ENCODE measurements at regions of chr4 and their contacts with region 1.

Region 1: GRCh38 chr4:150867148-150867547 is 147.9 kb downstream of the LRBA start:
- DNase-seq: peak in 1 of 2 donors; percentile 85
- ATAC-seq: peak; percentile 79 to 90 (median 86)
- H3K4me3 ChIP-seq: no peak overlapping the region
- H3K4me3 Mint-ChIP-seq: no peak overlapping the region
- H3K27ac ChIP-seq: no peak overlapping the region
- H3K27ac Mint-ChIP-seq: peak overlapping the region in 1 of 2 donors; percentile 22
- H3K4me1 ChIP-seq: no peaks in the 10 kb centered on the region
- H3K4me1 Mint-ChIP-seq: no peaks in the 10 kb centered on the region
- H3K27me3 ChIP-seq: no peaks in the 10 kb centered on the region
- H3K27me3 Mint-ChIP-seq: no peaks in the 10 kb centered on the region
- CTCF ChIP-seq: peak; percentile 70

Region 2: DNA sequence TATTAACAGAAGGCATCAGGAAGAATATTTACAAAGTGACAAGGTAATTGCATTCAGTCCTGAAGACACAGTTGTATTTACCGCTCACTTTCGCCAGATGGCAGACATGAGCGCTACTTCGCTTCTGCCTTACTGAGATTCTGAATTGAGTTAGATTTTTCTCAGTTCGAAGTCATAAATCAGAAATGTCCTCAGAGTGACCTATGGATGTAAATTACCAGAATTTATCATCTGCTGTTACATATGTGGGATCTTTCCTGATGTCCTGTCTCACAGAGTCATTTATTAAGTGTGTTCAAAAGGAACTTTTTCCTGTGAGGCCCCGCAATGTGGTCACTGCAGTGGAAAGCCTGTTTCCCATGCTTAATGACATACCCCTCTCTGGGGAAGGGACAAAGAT is 886.2 kb before region 1 on chr4:
- intact Hi-C with region 1: loop called (anchors 1 kb)
- DNase-seq: peak in 1 of 2 donors; percentile 67
- ATAC-seq: peak in 2 of 3 donors; percentile 58 to 73
- H3K4me3 ChIP-seq: no peak overlapping the region
- H3K4me3 Mint-ChIP-seq: no peak overlapping the region
- H3K27ac ChIP-seq: no peak overlapping the region
- H3K27ac Mint-ChIP-seq: no peak overlapping the region
- H3K4me1 ChIP-seq: no peaks in the 10 kb centered on the region
- H3K4me1 Mint-ChIP-seq: no peaks in the 10 kb centered on the region
- H3K27me3 ChIP-seq: no peaks in the 10 kb centered on the region
- H3K27me3 Mint-ChIP-seq: no peaks in the 10 kb centered on the region
- CTCF ChIP-seq: peak; percentile 67

Region 3: DNA sequence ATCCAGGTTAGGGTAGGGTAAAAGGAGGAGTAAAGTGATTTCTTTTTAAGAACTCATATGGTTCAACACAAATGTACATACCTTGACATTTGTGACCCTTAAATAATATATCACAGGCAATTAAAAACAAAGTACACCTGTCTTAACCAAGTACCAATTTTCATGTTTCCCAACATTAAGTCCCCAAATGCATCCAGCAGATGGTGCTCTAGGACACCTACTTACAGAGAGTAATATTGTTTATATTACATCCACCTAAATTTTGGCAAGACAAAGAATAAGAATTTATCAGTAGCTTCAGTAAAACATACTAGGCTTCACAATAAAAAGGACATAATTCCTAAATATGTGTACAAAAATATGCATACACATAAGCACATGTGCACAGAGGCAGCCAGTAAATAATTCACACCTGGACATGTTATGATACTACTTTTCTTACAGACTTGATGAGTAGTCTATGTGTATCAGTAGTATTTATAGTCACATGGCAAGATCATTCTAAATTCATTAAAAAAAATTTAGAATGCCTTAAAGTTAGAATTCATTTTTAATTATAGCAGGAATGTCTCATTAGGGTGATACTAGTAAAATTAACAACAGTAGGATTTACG is 569.2 kb before region 1 on chr4:
- intact Hi-C with region 1: loop called (anchors 1 kb)
- DNase-seq: peak in 1 of 2 donors; percentile 47
- ATAC-seq: no peak
- H3K4me3 ChIP-seq: no peak overlapping the region
- H3K4me3 Mint-ChIP-seq: no peak overlapping the region
- H3K27ac ChIP-seq: no peak overlapping the region
- H3K27ac Mint-ChIP-seq: no peak overlapping the region
- H3K4me1 ChIP-seq: no peaks in the 10 kb centered on the region
- H3K4me1 Mint-ChIP-seq: no peaks in the 10 kb centered on the region
- H3K27me3 ChIP-seq: no peaks in the 10 kb centered on the region
- H3K27me3 Mint-ChIP-seq: no peaks in the 10 kb centered on the region
- CTCF ChIP-seq: peak; percentile 48